ENCODE measurements at regions of chr2 and their contacts with region 1.

Region 1: GRCh38 chr2:237512774-237513466 is 25.9 kb downstream of the MLPH start:
- DNase-seq: peak; percentile 95
- H3K4me3 ChIP-seq: no peak overlapping the region
- H3K27ac ChIP-seq: peak overlapping the region in 2 of 4 donors; percentile 13 to 60
- H3K4me1 ChIP-seq: peaks cover 30 to 40% (median 34%) of the 10 kb centered on the region in 4 donors
- H3K27me3 ChIP-seq: no peaks in the 10 kb centered on the region
- CTCF ChIP-seq: peak; percentile 85 to 93 (median 89)
- EP300 ChIP-seq: no peak
- POLR2A ChIP-seq: no peak

Region 2: DNA sequence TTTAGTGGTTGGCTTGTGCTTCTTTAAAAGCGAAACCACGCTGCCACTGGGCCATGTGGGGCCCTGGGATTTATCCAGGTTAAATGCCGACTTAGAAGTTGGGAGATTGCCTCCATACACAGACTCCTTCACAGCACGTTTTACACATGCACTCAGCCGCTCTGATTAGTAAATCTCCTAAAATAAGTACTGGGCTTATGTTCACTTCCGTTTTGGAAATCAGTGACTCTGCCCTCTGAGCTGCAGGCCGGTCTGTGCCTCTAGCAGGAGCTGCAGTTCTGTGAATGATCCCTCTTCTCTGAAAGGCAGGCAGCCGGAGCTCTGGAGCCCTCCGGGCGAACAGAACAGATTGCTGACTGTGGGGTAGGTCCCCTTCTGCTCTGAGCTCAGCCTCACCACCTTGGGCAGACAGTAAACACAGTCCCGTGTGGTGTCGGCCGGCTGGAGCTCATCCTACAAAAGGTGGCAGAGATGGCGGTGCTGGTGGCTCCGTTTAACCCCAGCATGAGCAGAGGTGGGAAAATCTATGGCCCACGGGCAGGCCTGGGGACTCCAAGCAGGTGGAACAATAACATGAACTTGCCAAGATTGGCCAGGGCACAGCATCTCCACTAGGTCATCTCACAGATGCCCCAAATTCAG is 87.4 kb after region 1 on chr2:
- intact Hi-C with region 1: no loop called
- DNase-seq: no peak
- H3K4me3 ChIP-seq: peak overlapping the region; percentile 28 to 40 (median 38)
- H3K27ac ChIP-seq: peak overlapping the region; percentile 78 to 85 (median 83)
- H3K4me1 ChIP-seq: peaks cover 35 to 45% (median 40%) of the 10 kb centered on the region in 4 donors
- H3K27me3 ChIP-seq: no peaks in the 10 kb centered on the region
- CTCF ChIP-seq: peak; percentile 29 to 57 (median 42)
- EP300 ChIP-seq: no peak
- POLR2A ChIP-seq: peak; percentile 13

Region 3: DNA sequence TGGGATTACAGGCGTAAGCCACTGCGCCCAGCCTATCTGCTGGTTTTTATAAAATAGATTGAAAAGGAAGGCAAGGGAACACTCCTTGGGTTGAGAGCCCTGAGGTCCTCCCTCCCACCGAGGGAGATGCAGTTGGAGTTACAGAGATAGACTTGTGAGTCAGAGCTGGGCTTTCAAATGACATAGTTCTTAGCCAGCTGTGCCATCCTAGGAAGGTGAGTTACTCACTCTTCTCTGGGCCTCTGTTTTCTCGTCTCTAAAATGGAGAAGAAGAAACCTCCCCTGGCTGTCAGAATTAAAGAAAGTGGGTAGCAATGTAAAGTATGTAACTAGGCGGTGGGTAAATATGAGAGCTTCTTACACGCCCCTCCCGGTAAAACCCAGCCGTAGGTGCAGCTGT is 116.8 kb after region 1 on chr2:
- intact Hi-C with region 1: loop called (anchors 10 kb)
- DNase-seq: no peak
- H3K4me3 ChIP-seq: no peak overlapping the region
- H3K27ac ChIP-seq: no peak overlapping the region
- H3K4me1 ChIP-seq: peaks cover 53 to 81% (median 77%) of the 10 kb centered on the region in 4 donors
- H3K27me3 ChIP-seq: no peaks in the 10 kb centered on the region
- CTCF ChIP-seq: no peak
- EP300 ChIP-seq: no peak
- POLR2A ChIP-seq: no peak